Activated CD8-positive, alpha-beta T cell treated with anti-CD3 and anti-CD28 coated beads for 36 hours (primary cell): ENCODE measurements at regions of chr10 and their contacts with region 1.

Region 1: GRCh38 chr10:110584006-110584405 is 16.5 kb downstream of the SMC3 start:
- DNase-seq: no peak
- ATAC-seq: no peak
- H3K4me3 Mint-ChIP-seq: no peak overlapping the region
- H3K27ac Mint-ChIP-seq: no peak overlapping the region
- H3K4me1 Mint-ChIP-seq: no peaks in the 10 kb centered on the region
- H3K27me3 Mint-ChIP-seq: no peaks in the 10 kb centered on the region
- CTCF ChIP-seq: no peak

Region 2: DNA sequence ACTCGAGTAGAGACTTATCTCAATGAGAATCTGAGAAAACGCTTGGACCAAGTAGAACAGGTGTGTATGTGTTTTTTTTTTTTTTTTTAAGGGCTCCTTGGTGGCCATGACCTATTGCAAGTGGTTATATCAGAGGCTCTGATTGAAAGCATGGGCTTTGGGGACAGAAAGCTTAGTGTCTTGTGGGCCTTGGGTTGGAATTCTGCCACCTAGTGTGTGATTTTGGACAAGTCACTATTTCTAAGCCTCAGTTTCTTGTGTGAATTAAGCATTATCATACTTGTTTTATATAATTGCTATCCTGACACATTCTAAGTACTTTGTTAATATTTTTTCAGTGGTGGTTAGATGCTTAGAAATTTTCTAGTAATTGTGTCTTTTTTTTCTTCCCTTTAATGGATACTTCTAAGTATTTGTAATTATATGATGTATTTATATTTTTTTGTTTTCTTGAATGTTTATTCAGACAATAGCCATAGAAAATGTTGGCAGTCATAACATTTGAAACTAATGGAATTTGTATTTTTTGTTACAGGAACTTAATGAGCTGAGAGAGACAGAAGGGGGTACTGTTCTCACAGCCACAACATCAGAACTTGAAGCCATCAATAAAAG is 16.6 kb after region 1 on chr10:
- CTCF ChIA-PET with region 1: interaction called, 23 read pairs
- POLR2A ChIA-PET with region 1: interaction called, 3 read pairs
- intact Hi-C with region 1: no loop called
- DNase-seq: peak; percentile 38
- ATAC-seq: peak; percentile 80
- H3K4me3 Mint-ChIP-seq: no peak overlapping the region
- H3K27ac Mint-ChIP-seq: no peak overlapping the region
- H3K4me1 Mint-ChIP-seq: no peaks in the 10 kb centered on the region
- H3K27me3 Mint-ChIP-seq: no peaks in the 10 kb centered on the region
- CTCF ChIP-seq: peak; percentile 69

Region 3: DNA sequence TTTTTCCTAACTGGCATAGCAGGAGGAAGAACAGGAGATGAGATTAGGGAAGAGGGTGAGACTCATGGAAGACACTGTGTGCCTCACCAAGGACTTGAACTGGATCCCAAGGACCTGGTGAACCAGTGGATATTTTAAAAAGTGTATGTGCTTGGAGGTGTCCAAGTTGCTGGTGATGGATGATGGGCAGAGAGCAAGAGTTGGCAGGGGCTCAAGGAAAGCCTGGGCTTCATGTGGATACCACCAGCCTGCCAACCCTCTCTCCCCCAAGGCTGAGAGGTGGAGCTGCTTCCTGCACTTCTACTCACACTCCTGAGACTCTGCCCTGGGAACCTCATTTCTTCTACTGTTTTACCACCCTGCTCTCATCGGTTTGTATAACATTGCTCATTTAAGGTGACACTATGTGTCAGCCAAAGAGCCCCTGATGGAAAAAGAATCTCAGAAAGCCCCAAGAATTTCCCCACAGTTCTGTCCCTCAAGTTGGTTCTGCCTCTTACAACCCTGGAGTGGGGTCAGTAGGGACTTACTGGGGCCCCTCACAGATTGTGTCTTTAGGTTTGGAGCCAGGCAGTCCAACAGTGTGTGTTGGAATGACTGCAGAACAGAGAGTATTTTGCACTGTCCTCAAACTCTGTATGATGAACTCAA is 231.5 kb after region 1 on chr10:
- CTCF ChIA-PET with region 1: no interaction called
- POLR2A ChIA-PET with region 1: no interaction called
- intact Hi-C with region 1: no loop called
- DNase-seq: peak; percentile 46
- ATAC-seq: peak; percentile 91
- H3K4me3 Mint-ChIP-seq: no peak overlapping the region
- H3K27ac Mint-ChIP-seq: peak overlapping the region; percentile 66
- H3K4me1 Mint-ChIP-seq: peaks cover 47% of the 10 kb centered on the region
- H3K27me3 Mint-ChIP-seq: no peaks in the 10 kb centered on the region
- CTCF ChIP-seq: no peak